H1 (cell line): ENCODE measurements at regions of chr11 and their contacts with region 1.

Region 1: GRCh38 chr11:123640677-123641494 is 13.5 kb downstream of the SCN3B start:
- DNase-seq: peak in 1 of 2 experiments; percentile 86
- H3K4me3 ChIP-seq: no peak overlapping the region
- H3K27ac ChIP-seq: no peak overlapping the region
- H3K4me1 ChIP-seq: peaks cover 0 to 4% (median 3%) of the 10 kb centered on the region in 4 experiments; a peak in 5 of 7 replicates
- H3K27me3 ChIP-seq: 0 out of 7 replicates have a peak, but pooled peaks cover 0 to 2% (median 0%) of the 10 kb centered on the region in 4 experiments
- CTCF ChIP-seq: peak; percentile 85 to 92 (median 86)
- EP300 ChIP-seq: no peak
- POLR2A ChIP-seq: no peak
- RAD21 ChIP-seq: peak; percentile 94 to 95

Region 2: GRCh38 chr11:123426789-123427188 is 214.1 kb before region 1 on chr11:
- CTCF ChIA-PET with region 1: no interaction called
- POLR2A ChIA-PET with region 1: no interaction called
- DNase-seq: no peak
- H3K4me3 ChIP-seq: no peak overlapping the region
- H3K27ac ChIP-seq: no peak overlapping the region
- H3K4me1 ChIP-seq: peaks cover 12 to 17% (median 13%) of the 10 kb centered on the region in 4 experiments
- H3K27me3 ChIP-seq: peaks cover 0 to 18% (median under 1%) of the 10 kb centered on the region in 4 experiments; a peak in 4 of 7 replicates
- CTCF ChIP-seq: no peak
- EP300 ChIP-seq: no peak
- POLR2A ChIP-seq: no peak
- RAD21 ChIP-seq: no peak

Region 3: DNA sequence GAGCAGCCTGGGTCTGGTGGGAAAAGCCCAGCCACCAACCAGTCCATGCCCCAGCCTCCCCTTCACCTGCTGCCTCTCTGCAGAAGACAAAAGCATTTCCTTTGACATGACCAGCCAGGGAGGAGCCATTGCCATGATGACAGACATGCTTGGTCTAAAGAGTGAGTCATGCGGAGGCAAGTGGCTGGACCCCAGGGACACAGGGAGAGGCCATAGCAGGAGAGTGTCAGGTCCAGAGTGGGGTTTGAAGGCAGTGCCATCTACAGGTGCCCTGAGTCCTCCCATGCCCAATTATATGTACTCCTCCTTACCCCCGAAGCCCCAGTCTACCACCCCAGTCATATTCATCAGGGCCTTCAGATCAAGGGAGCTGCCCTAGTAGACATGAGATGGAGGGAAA is 53.8 kb before region 1 on chr11:
- CTCF ChIA-PET with region 1: interaction called, 15 read pairs
- POLR2A ChIA-PET with region 1: no interaction called
- DNase-seq: no peak
- H3K4me3 ChIP-seq: no peak overlapping the region
- H3K27ac ChIP-seq: no peak overlapping the region
- H3K4me1 ChIP-seq: peaks cover 0 to 2% (median 0%) of the 10 kb centered on the region in 4 experiments; a peak in 2 of 7 replicates
- H3K27me3 ChIP-seq: no peaks in the 10 kb centered on the region
- CTCF ChIP-seq: no peak
- EP300 ChIP-seq: no peak
- POLR2A ChIP-seq: no peak
- RAD21 ChIP-seq: no peak

Region 4: GRCh38 chr11:123628936-123629683 is 11.8 kb before region 1 on chr11:
- CTCF ChIA-PET with region 1: interaction called, 13 read pairs
- POLR2A ChIA-PET with region 1: no interaction called
- DNase-seq: no peak
- H3K4me3 ChIP-seq: no peak overlapping the region
- H3K27ac ChIP-seq: no peak overlapping the region
- H3K4me1 ChIP-seq: peaks cover 0 to 3% (median 0%) of the 10 kb centered on the region in 4 experiments; a peak in 2 of 7 replicates
- H3K27me3 ChIP-seq: no peaks in the 10 kb centered on the region
- CTCF ChIP-seq: no peak
- EP300 ChIP-seq: no peak
- POLR2A ChIP-seq: peak in 1 of 2 experiments; percentile 34; a peak in 1 of 3 replicates
- RAD21 ChIP-seq: no peak

Region 5: GRCh38 chr11:123654566-123655081 is 13.7 kb after region 1 on chr11 and contains the start of gene SCN3B:
- CTCF ChIA-PET with region 1: interaction called, 38 read pairs
- POLR2A ChIA-PET with region 1: no interaction called
- DNase-seq: peak in 1 of 2 experiments; percentile 91
- H3K4me3 ChIP-seq: peak within 1 kb of the TSS; percentile 75 to 80 (median 78)
- H3K27ac ChIP-seq: no peak within 1 kb of the TSS
- H3K4me1 ChIP-seq: peaks cover 0 to 3% (median 1%) of the 10 kb centered on the region in 4 experiments; a peak in 3 of 7 replicates
- H3K27me3 ChIP-seq: peaks cover 8 to 32% (median 21%) of the 10 kb centered on the region in 4 experiments
- CTCF ChIP-seq: no peak
- EP300 ChIP-seq: no peak
- POLR2A ChIP-seq: no peak
- RAD21 ChIP-seq: no peak
- total RNA-seq, gene SCN3B: 0.82 and 1.1 TPM in 2 replicates

Region 6: GRCh38 chr11:123672568-123672967 is 31.7 kb after region 1 on chr11:
- CTCF ChIA-PET with region 1: interaction called, 11 read pairs
- POLR2A ChIA-PET with region 1: no interaction called
- DNase-seq: no peak
- H3K4me3 ChIP-seq: no peak overlapping the region
- H3K27ac ChIP-seq: no peak overlapping the region
- H3K4me1 ChIP-seq: peaks cover 0 to 5% (median under 1%) of the 10 kb centered on the region in 4 experiments; a peak in 2 of 7 replicates
- H3K27me3 ChIP-seq: no peaks in the 10 kb centered on the region; a peak in 1 of 7 replicates
- CTCF ChIP-seq: no peak
- EP300 ChIP-seq: no peak
- POLR2A ChIP-seq: no peak
- RAD21 ChIP-seq: no peak

Region 7: GRCh38 chr11:123696183-123696582 is 55.3 kb after region 1 on chr11:
- CTCF ChIA-PET with region 1: interaction called, 11 read pairs
- POLR2A ChIA-PET with region 1: no interaction called
- DNase-seq: no peak
- H3K4me3 ChIP-seq: no peak overlapping the region
- H3K27ac ChIP-seq: no peak overlapping the region
- H3K4me1 ChIP-seq: no peaks in the 10 kb centered on the region
- H3K27me3 ChIP-seq: no peaks in the 10 kb centered on the region; a peak in 1 of 7 replicates
- CTCF ChIP-seq: peak in 1 of 3 experiments; percentile 10; a peak in 1 of 4 replicates
- EP300 ChIP-seq: no peak
- POLR2A ChIP-seq: no peak
- RAD21 ChIP-seq: no peak

Region 8: GRCh38 chr11:123899792-123900191 is 258.9 kb after region 1 on chr11:
- CTCF ChIA-PET with region 1: no interaction called
- POLR2A ChIA-PET with region 1: no interaction called
- DNase-seq: no peak
- H3K4me3 ChIP-seq: no peak overlapping the region
- H3K27ac ChIP-seq: no peak overlapping the region; the same call in 1 of the 2 replicates
- H3K4me1 ChIP-seq: 0 out of 7 replicates have a peak, but pooled peaks cover 0 to 3% (median 0%) of the 10 kb centered on the region in 4 experiments
- H3K27me3 ChIP-seq: no peaks in the 10 kb centered on the region
- CTCF ChIP-seq: no peak
- EP300 ChIP-seq: no peak
- POLR2A ChIP-seq: no peak
- RAD21 ChIP-seq: no peak